IMR-90 (cell line): ENCODE measurements at regions of chr16 and their contacts with region 1.

Region 1: DNA sequence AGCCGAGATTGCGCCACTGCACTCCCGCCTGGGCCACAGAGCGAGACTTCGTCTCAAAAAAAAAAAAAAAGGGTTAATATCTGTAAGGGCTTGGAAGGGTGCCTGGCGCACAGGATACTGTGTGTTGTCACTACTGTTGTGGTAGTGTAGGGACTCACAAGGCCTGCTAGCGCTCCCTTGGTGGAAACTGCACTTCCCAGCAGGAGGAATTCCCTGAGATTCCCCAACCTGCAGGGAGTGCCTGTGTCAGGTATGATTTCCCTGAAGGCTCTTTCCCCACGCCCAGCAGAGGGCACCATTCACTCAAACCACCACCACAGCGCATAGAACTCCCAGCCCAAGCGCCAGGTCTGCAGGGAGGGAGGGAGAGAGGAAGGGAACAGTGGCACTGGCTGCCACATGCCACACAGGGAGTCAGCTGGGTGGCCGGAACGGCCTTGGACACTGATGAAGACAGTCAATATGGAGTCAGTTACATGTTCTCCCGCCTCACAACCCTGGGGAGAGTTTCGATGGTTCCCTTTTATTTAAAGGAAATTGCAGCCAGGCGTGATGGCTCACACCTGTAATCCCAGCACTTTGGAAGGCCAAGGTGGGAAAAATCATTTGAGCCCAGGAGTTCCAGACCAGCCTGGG is 32.7 kb upstream of the CDH1 start:
- DNase-seq: peak; percentile 48
- ATAC-seq: peak; percentile 91
- H3K4me3 ChIP-seq: no peak overlapping the region
- H3K27ac ChIP-seq: no peak overlapping the region
- H3K4me1 ChIP-seq: peaks cover 4% of the 10 kb centered on the region; the same call in 1 of the 2 replicates
- H3K27me3 ChIP-seq: no peaks in the 10 kb centered on the region; the same call in none of the 2 replicates
- CTCF ChIP-seq: peak; percentile 65
- POLR2A ChIP-seq: no peak
- RAD21 ChIP-seq: peak; percentile 69

Region 2: GRCh38 chr16:67514382-67514828 is 1189.9 kb before region 1 on chr16:
- CTCF ChIA-PET with region 1: no interaction called
- POLR2A ChIA-PET with region 1: interaction called, 15 read pairs
- dilution Hi-C with region 1: no loop called
- in situ Hi-C with region 1: no loop called
- intact Hi-C with region 1: no loop called
- DNase-seq: peak; percentile 84
- ATAC-seq: peak; percentile 81
- H3K4me3 ChIP-seq: no peak overlapping the region
- H3K27ac ChIP-seq: no peak overlapping the region
- H3K4me1 ChIP-seq: peaks cover 6% of the 10 kb centered on the region
- H3K27me3 ChIP-seq: no peaks in the 10 kb centered on the region; the same call in 1 of the 2 replicates
- CTCF ChIP-seq: peak; percentile 80
- POLR2A ChIP-seq: no peak
- RAD21 ChIP-seq: peak; percentile 67

Region 3: GRCh38 chr16:68590201-68590994 is 114.0 kb before region 1 on chr16:
- CTCF ChIA-PET with region 1: no interaction called
- POLR2A ChIA-PET with region 1: no interaction called
- dilution Hi-C with region 1: no loop called
- in situ Hi-C with region 1: no loop called
- intact Hi-C with region 1: loop called (anchors 2 kb)
- DNase-seq: peak; percentile 7
- ATAC-seq: peak; percentile 98
- H3K4me3 ChIP-seq: no peak overlapping the region
- H3K27ac ChIP-seq: no peak overlapping the region
- H3K4me1 ChIP-seq: no peaks in the 10 kb centered on the region
- H3K27me3 ChIP-seq: no peaks in the 10 kb centered on the region
- CTCF ChIP-seq: peak; percentile 42
- POLR2A ChIP-seq: no peak
- RAD21 ChIP-seq: peak; percentile 51

Region 4: DNA sequence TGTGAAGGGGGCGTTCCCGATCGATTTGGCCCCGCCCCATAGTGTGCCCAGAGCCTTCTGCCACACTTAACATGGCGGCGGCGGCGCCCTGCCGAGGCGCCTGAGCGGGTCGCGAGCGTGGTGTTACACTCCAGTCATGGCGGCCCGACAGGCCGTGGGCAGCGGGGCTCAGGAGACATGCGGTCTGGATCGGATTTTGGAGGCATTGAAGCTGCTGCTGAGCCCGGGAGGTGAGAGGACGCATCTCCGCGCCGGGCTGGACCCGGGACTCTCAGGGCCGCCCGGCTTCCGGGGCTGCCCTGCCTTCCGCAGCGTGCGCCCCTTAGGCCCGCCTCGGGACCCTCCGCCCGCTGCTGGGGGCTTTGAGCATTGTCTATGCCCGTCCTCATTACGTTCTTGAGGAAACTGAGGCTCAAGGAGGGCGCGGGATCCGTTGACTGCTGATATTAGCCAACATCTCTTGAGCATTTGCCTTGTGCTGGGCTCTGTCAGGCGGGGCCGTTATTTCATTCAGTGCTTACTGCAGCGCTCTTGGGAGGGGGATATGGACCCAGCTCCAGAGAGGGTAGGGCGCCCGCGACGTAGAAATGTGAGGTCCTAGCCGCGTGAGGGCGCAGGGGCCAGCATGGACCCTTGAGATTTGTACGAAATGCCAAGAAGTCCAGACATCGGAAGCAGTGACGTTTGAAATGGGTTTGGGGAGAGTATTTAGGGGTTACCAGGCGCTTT is 139.3 kb after region 1 on chr16 and contains the start of gene TANGO6:
- CTCF ChIA-PET with region 1: no interaction called
- POLR2A ChIA-PET with region 1: no interaction called
- dilution Hi-C with region 1: no loop called
- in situ Hi-C with region 1: no loop called
- intact Hi-C with region 1: loop called (anchors 1 kb)
- DNase-seq: peak; percentile 68
- ATAC-seq: peak; percentile 95
- H3K4me3 ChIP-seq: peak within 1 kb of the TSS; percentile 89
- H3K27ac ChIP-seq: peak within 1 kb of the TSS; percentile 95
- H3K4me1 ChIP-seq: peaks cover 3% of the 10 kb centered on the region; the same call in 1 of the 2 replicates
- H3K27me3 ChIP-seq: no peaks in the 10 kb centered on the region
- CTCF ChIP-seq: peak; percentile 39
- POLR2A ChIP-seq: peak; percentile 71
- RAD21 ChIP-seq: peak; percentile 35; the same call in 1 of the 2 replicates
- total RNA-seq, gene TANGO6: 19.7 and 22.4 TPM in 2 replicates

Region 5: GRCh38 chr16:69112285-69113129 is 408.2 kb after region 1 on chr16:
- CTCF ChIA-PET with region 1: no interaction called
- POLR2A ChIA-PET with region 1: no interaction called
- dilution Hi-C with region 1: no loop called
- in situ Hi-C with region 1: loop called (anchors 10 kb)
- intact Hi-C with region 1: no loop called
- DNase-seq: peak; percentile 25
- ATAC-seq: peak; percentile 87
- H3K4me3 ChIP-seq: no peak overlapping the region
- H3K27ac ChIP-seq: no peak overlapping the region
- H3K4me1 ChIP-seq: no peaks in the 10 kb centered on the region
- H3K27me3 ChIP-seq: no peaks in the 10 kb centered on the region
- CTCF ChIP-seq: peak; percentile 57
- POLR2A ChIP-seq: no peak
- RAD21 ChIP-seq: peak; percentile 51; the same call in 1 of the 2 replicates